PC-9 (cell line): ENCODE measurements at regions of chr2 and their contacts with region 1.

Region 1: DNA sequence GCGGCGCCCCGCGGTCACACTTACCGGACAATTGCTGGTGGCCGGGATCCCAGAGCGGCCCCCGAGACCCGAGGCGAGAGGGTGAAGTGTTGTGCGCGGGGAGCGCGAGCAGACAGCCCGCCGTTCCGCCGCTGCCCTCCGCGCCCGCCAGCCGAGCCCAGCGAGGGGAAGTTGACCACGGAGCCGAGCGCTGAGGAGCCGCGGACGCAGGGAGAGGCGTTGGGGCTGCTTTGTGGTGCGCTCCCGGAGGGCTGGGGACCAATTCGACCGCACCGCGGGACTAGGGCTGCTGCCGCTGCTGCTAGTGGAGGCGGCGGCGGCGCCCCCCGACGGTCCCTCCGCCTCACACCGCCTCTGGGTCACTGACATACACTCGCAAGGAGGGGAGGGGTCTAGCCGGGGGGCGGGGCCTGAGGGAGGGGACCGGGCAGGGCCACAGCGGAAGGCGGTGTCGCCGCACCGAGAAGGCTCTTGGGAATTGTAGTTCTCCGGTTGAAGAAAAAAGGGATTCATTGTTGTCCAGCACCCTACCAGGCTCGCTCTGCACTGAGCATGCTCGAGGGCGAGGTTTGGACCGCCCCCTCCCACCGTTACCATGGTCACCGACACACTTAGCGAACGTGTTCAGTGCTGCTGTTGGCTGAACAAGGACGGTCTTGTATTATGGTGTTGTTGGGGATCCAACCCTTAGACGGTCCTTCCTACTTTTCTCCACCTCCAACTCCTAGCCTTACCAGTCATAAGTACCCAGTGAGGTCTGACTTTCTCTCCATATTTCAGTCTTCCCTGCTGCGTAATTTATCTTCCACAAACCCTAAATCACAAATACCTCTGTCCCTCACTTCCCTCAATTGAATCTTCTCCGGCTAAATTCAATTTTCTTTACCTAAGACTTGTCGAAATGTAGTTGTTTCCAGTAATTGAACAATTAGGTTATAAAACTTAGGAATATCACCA is at the start of gene PELI1:
- DNase-seq: peak; percentile 98 to 99
- H3K4me3 ChIP-seq: peak within 1 kb of the TSS; percentile 80
- H3K27ac ChIP-seq: no peak within 1 kb of the TSS
- H3K4me1 ChIP-seq: peaks cover 36% of the 10 kb centered on the region
- H3K27me3 ChIP-seq: no peaks in the 10 kb centered on the region
- CTCF ChIP-seq: peak; percentile 40; the same call in 1 of the 2 replicates
- total RNA-seq, gene PELI1: 32.6 and 33.1 TPM in 2 replicates

Region 2: GRCh38 chr2:64062829-64063228 is 81.5 kb before region 1 on chr2:
- CTCF ChIA-PET with region 1: no interaction called
- POLR2A ChIA-PET with region 1: interaction called, 16 read pairs
- intact Hi-C with region 1: no loop called
- DNase-seq: peak; percentile 34 to 88
- H3K4me3 ChIP-seq: no peak overlapping the region
- H3K27ac ChIP-seq: no peak overlapping the region
- H3K4me1 ChIP-seq: peaks cover 19% of the 10 kb centered on the region
- H3K27me3 ChIP-seq: no peaks in the 10 kb centered on the region
- CTCF ChIP-seq: no peak

Region 3: GRCh38 chr2:64179582-64180321 is 35.4 kb after region 1 on chr2:
- CTCF ChIA-PET with region 1: no interaction called
- POLR2A ChIA-PET with region 1: no interaction called
- intact Hi-C with region 1: no loop called
- DNase-seq: no peak
- H3K4me3 ChIP-seq: no peak overlapping the region
- H3K27ac ChIP-seq: no peak overlapping the region
- H3K4me1 ChIP-seq: 0 out of 2 replicates have a peak, but pooled peaks cover 4% of the 10 kb centered on the region
- H3K27me3 ChIP-seq: no peaks in the 10 kb centered on the region
- CTCF ChIP-seq: no peak

Region 4: GRCh38 chr2:64203858-64204632 is 59.7 kb after region 1 on chr2:
- CTCF ChIA-PET with region 1: no interaction called
- POLR2A ChIA-PET with region 1: interaction called, 3 read pairs
- intact Hi-C with region 1: loop called (anchors 1 kb)
- DNase-seq: peak; percentile 71 to 97
- H3K4me3 ChIP-seq: peak overlapping the region; percentile 40; the same call in 1 of the 2 replicates
- H3K27ac ChIP-seq: peak overlapping the region; percentile 93
- H3K4me1 ChIP-seq: peaks cover 45% of the 10 kb centered on the region
- H3K27me3 ChIP-seq: no peaks in the 10 kb centered on the region
- CTCF ChIP-seq: no peak

Region 5: GRCh38 chr2:64311948-64312621 is 167.8 kb after region 1 on chr2:
- CTCF ChIA-PET with region 1: interaction called, 7 read pairs
- POLR2A ChIA-PET with region 1: no interaction called
- intact Hi-C with region 1: loop called (anchors 5 kb)
- DNase-seq: peak; percentile 70 to 73
- H3K4me3 ChIP-seq: no peak overlapping the region
- H3K27ac ChIP-seq: no peak overlapping the region
- H3K4me1 ChIP-seq: no peaks in the 10 kb centered on the region
- H3K27me3 ChIP-seq: no peaks in the 10 kb centered on the region
- CTCF ChIP-seq: no peak

Region 6: DNA sequence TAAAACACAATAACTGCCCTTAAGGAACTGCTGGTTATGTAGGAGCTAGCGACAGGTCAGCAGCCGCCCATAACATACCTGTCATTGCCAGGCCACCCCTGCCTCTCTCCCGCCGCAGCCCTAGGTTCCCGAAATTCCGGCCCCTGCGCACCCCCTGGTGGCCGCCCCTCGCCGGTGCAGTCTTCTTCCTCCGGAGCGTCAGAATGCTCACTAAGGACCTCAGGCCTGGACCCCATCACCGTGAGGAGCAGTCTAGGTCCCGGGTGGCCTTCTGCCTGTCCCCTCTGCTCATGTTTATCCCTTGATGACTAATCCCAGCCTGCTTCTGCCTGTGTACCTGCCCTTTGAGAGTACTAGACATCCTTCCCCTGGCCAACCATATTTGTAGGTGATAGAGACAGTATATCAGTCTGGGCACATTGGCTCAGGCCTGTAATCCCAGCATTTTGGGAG is 729.2 kb after region 1 on chr2:
- CTCF ChIA-PET with region 1: no interaction called
- POLR2A ChIA-PET with region 1: no interaction called
- intact Hi-C with region 1: loop called (anchors 5 kb)
- DNase-seq: peak; percentile 66 to 88
- H3K4me3 ChIP-seq: no peak overlapping the region
- H3K27ac ChIP-seq: no peak overlapping the region
- H3K4me1 ChIP-seq: peaks cover 26% of the 10 kb centered on the region
- H3K27me3 ChIP-seq: no peaks in the 10 kb centered on the region
- CTCF ChIP-seq: peak; percentile 99